ENCODE measurements at regions of chr5 and their contacts with region 1.

Region 1: DNA sequence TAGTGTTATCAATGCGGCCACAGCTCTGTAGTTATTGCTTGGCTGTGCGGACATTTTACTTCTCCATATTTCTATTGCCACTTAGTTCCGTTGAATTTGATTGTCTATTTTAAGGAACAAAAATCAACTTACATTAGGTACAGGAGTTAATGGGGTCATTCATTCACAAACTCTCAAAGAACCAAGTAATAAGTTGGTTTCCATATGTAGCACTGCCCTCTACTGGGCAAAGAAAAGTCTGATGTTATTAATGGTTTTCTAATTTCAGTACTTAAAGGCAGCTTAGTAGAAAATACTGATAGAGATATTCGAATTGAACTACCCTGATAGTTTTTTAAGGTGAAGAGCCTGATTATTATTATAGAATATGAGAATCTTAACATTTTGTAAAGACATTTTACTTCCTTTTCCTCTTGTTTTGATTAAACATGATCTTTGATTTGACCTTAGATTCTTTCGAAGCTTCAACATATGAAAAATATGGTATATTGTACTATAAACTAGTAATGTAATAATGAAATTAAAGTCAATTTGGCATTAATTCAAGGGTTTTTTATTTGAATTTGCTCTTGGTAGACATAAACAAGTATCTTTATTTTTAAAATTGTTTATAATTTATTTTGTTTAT is 119.5 kb upstream of the CTNND2 start:
- DNase-seq: peak; percentile 44
- H3K4me3 ChIP-seq: no peak overlapping the region
- H3K27ac ChIP-seq: no peak overlapping the region
- H3K4me1 ChIP-seq: no peaks in the 10 kb centered on the region
- H3K27me3 ChIP-seq: no peaks in the 10 kb centered on the region
- CTCF ChIP-seq: peak; percentile 69

Region 2: GRCh38 chr5:10452768-10453331 is 1570.9 kb before region 1 on chr5:
- CTCF ChIA-PET with region 1: no interaction called
- POLR2A ChIA-PET with region 1: no interaction called
- intact Hi-C with region 1: loop called (anchors 10 kb)
- DNase-seq: peak; percentile 78
- H3K4me3 ChIP-seq: no peak overlapping the region
- H3K27ac ChIP-seq: no peak overlapping the region
- H3K4me1 ChIP-seq: no peaks in the 10 kb centered on the region
- H3K27me3 ChIP-seq: no peaks in the 10 kb centered on the region
- CTCF ChIP-seq: peak; percentile 76

Region 3: DNA sequence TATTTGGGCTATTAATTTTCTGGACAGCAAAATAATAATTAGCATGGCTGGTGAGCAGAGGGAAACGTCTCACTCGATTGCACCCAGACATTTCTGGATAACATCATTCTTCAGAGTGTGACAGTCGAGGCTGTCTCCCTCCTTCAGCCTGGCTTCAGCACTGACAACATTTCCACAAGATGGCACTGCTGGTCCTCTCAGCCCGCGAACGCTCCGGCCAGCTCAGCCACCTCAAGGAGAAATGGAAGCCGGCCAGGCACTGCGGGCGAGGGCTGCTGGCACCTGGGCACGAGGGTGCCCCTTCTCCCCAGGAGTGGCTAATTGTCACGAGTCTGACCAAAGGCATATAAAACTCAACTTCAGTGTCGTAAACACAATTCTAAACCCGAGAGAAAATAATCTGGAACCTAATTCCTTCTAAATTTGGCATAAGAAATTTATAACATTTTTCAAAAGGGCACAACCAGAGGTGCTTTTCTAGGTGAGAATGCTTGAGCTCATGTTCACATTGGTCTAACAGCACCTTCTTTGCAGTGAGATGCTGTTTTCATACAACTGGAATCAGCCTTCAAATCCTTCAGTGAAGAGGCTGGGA is 1328.6 kb before region 1 on chr5:
- CTCF ChIA-PET with region 1: no interaction called
- POLR2A ChIA-PET with region 1: no interaction called
- intact Hi-C with region 1: loop called (anchors 10 kb)
- DNase-seq: peak; percentile 61
- H3K4me3 ChIP-seq: no peak overlapping the region
- H3K27ac ChIP-seq: no peak overlapping the region
- H3K4me1 ChIP-seq: peaks cover 21% of the 10 kb centered on the region
- H3K27me3 ChIP-seq: no peaks in the 10 kb centered on the region
- CTCF ChIP-seq: peak; percentile 75

Region 4: GRCh38 chr5:10863763-10864383 is 1159.9 kb before region 1 on chr5:
- CTCF ChIA-PET with region 1: no interaction called
- POLR2A ChIA-PET with region 1: no interaction called
- intact Hi-C with region 1: loop called (anchors 5 kb)
- DNase-seq: peak; percentile 68
- H3K4me3 ChIP-seq: no peak overlapping the region
- H3K27ac ChIP-seq: no peak overlapping the region
- H3K4me1 ChIP-seq: no peaks in the 10 kb centered on the region
- H3K27me3 ChIP-seq: peaks cover 3% of the 10 kb centered on the region
- CTCF ChIP-seq: peak; percentile 92

Region 5: DNA sequence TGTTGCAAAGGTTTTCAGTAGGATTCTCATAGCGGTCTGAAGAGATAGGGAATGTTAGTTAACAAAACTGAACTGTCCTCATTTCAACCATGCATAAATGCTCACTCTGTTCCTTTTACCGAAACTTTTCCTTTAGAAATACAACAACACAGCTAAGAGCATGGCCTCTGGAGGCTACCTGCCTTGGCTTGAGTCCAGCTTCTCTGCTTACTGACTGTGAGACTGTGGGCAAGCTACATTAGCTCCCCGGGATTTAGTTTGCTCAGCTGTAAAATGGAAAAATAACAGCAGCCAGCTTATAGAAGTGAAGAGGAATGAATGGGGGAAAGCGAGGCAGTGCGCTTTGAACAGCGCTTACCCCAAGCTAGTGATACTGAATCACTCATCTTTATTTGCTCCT is 754.8 kb before region 1 on chr5:
- CTCF ChIA-PET with region 1: no interaction called
- POLR2A ChIA-PET with region 1: no interaction called
- intact Hi-C with region 1: loop called (anchors 5 kb)
- DNase-seq: no peak
- H3K4me3 ChIP-seq: no peak overlapping the region
- H3K27ac ChIP-seq: no peak overlapping the region
- H3K4me1 ChIP-seq: no peaks in the 10 kb centered on the region
- H3K27me3 ChIP-seq: peaks cover 3% of the 10 kb centered on the region
- CTCF ChIP-seq: no peak

Region 6: GRCh38 chr5:11955331-11955730 is 68.4 kb before region 1 on chr5:
- CTCF ChIA-PET with region 1: no interaction called
- POLR2A ChIA-PET with region 1: no interaction called
- intact Hi-C with region 1: no loop called
- DNase-seq: no peak
- H3K4me3 ChIP-seq: no peak overlapping the region
- H3K27ac ChIP-seq: no peak overlapping the region
- H3K4me1 ChIP-seq: no peaks in the 10 kb centered on the region
- H3K27me3 ChIP-seq: no peaks in the 10 kb centered on the region
- CTCF ChIP-seq: no peak

Region 7: DNA sequence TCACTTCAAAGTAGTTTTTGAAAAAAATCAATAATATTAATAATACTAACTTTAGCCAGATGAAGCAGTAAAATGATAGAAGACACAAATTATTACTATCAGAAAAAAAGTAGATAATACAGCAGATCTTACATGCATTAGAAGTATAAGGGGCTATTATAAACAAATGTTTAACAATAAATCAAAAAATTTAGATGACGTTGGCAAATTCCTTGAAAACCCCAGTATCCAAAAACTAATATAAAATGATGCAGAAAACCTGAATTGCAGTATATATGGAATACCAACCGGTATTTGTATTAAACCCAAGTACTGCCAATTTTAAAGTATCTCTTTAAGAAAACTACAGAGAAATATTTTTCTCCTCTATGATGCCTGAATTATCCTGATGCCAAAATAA is 453.8 kb after region 1 on chr5:
- CTCF ChIA-PET with region 1: no interaction called
- POLR2A ChIA-PET with region 1: no interaction called
- intact Hi-C with region 1: no loop called
- DNase-seq: no peak
- H3K4me3 ChIP-seq: no peak overlapping the region
- H3K27ac ChIP-seq: no peak overlapping the region
- H3K4me1 ChIP-seq: no peaks in the 10 kb centered on the region
- H3K27me3 ChIP-seq: no peaks in the 10 kb centered on the region
- CTCF ChIP-seq: no peak

Region 8: GRCh38 chr5:13957032-13957645 is 1933.4 kb after region 1 on chr5:
- CTCF ChIA-PET with region 1: no interaction called
- POLR2A ChIA-PET with region 1: no interaction called
- intact Hi-C with region 1: loop called (anchors 5 kb)
- DNase-seq: peak; percentile 69
- H3K4me3 ChIP-seq: no peak overlapping the region
- H3K27ac ChIP-seq: no peak overlapping the region
- H3K4me1 ChIP-seq: no peaks in the 10 kb centered on the region
- H3K27me3 ChIP-seq: peaks cover 16% of the 10 kb centered on the region
- CTCF ChIP-seq: peak; percentile 72